ENCODE measurements at regions of chr12 and their contacts with region 1.

Region 1: DNA sequence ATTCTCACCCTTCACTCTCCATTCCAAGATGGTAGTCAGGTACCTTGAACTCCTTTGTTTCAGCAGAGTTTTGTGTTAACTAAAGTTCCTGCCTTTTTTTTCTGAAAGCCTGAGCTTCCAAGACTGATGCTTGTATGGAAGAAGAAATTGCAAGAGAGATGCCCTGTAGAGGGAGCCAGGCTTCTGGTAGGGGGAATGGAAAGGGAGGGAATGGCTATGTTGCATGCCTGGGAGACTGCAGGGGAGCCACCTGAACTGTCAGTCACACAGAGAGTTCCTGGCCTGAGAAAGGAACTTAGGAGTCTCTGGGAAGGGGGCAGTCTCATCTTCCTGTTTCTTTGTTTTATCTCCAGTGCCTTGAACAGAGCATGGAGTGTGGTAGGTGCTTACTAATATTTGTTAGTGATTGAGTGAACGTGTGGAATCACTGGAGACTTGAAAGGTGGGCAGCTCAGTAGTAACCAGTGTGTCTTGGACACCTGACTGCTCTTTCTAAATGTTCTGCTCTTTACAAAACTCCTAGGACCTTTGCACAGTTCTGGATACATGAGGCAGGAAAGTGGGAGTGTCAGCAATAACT is 132.2 kb downstream of the ANO4 start:
- DNase-seq: peak; percentile 39
- H3K4me3 ChIP-seq: no peak overlapping the region
- H3K27ac ChIP-seq: no peak overlapping the region
- H3K4me1 ChIP-seq: peaks cover 16% of the 10 kb centered on the region
- H3K27me3 ChIP-seq: no peaks in the 10 kb centered on the region
- CTCF ChIP-seq: peak; percentile 45 to 70

Region 2: DNA sequence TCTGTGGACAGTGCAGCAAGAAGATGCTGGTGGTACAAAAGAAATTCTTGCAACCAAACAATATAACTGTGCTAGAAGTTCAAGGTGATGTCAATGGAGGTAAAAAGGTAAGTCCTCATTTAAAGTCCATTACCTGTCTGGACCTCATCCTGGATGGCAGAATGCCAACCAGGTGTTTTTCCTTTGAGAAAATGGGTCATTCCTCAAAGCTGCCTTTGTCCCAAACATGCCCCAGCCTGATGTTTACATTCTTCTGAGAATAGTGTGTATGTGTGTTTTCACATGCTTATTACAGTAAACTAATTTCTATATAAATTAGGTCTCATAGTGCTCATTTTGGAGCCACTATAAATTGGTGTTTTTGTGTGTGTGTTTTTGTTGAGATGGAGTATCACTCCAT is 701.3 kb before region 1 on chr12:
- CTCF ChIA-PET with region 1: no interaction called
- dilution Hi-C with region 1: no loop called
- in situ Hi-C with region 1: no loop called
- intact Hi-C with region 1: no loop called
- DNase-seq: peak; percentile 85
- H3K4me3 ChIP-seq: no peak overlapping the region
- H3K27ac ChIP-seq: no peak overlapping the region
- H3K4me1 ChIP-seq: peaks cover 17% of the 10 kb centered on the region
- H3K27me3 ChIP-seq: no peaks in the 10 kb centered on the region
- CTCF ChIP-seq: no peak

Region 3: DNA sequence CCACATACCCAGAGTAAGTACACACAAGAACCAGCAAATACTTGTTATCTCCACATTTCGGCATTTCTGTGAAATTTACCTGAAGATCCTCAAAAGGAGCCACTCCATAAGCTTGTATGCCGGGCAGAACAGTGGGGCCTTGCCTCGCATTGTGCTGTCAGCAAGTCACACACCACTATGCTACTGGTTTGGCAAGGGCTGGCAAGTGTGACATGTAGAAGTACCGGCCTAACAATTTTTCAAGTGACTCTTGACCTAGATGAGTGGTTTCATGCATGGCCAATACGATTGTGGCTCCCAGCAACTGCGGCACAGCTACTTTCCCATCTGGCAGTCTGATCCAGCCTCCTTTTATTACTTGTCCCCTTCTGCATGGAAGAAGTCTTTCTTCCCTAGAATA is 283.5 kb before region 1 on chr12:
- CTCF ChIA-PET with region 1: no interaction called
- dilution Hi-C with region 1: no loop called
- in situ Hi-C with region 1: no loop called
- intact Hi-C with region 1: no loop called
- DNase-seq: no peak
- H3K4me3 ChIP-seq: no peak overlapping the region
- H3K27ac ChIP-seq: no peak overlapping the region
- H3K4me1 ChIP-seq: no peaks in the 10 kb centered on the region
- H3K27me3 ChIP-seq: no peaks in the 10 kb centered on the region
- CTCF ChIP-seq: no peak

Region 4: DNA sequence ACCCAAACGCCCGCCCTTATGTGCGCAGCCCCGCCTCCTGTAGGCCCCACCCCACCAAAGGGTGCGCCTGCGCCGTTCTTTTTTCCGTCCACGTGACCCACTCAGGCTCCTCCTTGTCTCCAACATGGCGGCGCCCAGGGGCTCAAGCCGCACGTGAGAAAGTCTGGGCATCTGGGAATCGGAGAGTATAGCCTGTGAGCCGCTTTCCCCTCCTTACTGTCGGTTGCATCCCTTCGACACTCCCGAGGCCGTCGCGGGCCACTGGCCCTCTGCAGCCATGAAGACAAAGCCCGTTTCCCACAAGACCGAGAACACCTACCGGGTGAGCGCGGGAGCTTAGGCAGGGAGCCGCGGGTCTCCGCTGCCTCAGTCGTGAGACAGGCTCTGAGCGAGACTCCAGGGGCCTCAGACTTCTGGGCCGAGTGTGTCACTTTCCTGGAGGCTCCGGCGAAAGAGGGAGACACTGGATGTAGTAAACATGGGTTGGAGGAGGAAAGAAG is 353.3 kb after region 1 on chr12 and contains the start of gene UTP20:
- CTCF ChIA-PET with region 1: no interaction called
- dilution Hi-C with region 1: no loop called
- in situ Hi-C with region 1: no loop called
- intact Hi-C with region 1: loop called (anchors 5 kb)
- DNase-seq: peak; percentile 84
- H3K4me3 ChIP-seq: peak within 1 kb of the TSS; percentile 82 to 100 (median 99)
- H3K27ac ChIP-seq: peak within 1 kb of the TSS; percentile 78
- H3K4me1 ChIP-seq: no peaks in the 10 kb centered on the region
- H3K27me3 ChIP-seq: no peaks in the 10 kb centered on the region
- CTCF ChIP-seq: no peak
- total RNA-seq, gene UTP20: 19.2 to 21.2 TPM

Region 5: DNA sequence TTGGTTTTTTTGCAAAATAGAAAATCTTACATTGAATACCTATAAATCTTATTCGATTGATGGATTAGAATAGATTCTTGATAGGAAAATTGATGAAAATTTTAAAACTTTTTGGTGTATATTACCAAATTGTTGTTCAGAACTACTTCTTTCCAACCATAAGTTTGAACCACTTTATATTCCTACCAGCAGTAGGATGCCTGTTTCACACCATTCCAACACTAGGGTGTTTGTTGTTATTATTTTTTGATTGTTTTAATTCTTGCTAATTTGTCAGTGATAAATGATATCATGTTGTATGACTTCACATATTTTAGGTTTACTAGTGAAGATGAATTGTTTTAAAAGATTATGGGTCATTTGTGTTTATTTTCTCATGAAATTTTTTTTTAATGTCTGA is 396.5 kb after region 1 on chr12:
- CTCF ChIA-PET with region 1: no interaction called
- dilution Hi-C with region 1: no loop called
- in situ Hi-C with region 1: no loop called
- intact Hi-C with region 1: loop called (anchors 1 kb)
- DNase-seq: no peak
- H3K4me3 ChIP-seq: no peak overlapping the region
- H3K27ac ChIP-seq: no peak overlapping the region
- H3K4me1 ChIP-seq: no peaks in the 10 kb centered on the region
- H3K27me3 ChIP-seq: no peaks in the 10 kb centered on the region
- CTCF ChIP-seq: no peak

Region 6: DNA sequence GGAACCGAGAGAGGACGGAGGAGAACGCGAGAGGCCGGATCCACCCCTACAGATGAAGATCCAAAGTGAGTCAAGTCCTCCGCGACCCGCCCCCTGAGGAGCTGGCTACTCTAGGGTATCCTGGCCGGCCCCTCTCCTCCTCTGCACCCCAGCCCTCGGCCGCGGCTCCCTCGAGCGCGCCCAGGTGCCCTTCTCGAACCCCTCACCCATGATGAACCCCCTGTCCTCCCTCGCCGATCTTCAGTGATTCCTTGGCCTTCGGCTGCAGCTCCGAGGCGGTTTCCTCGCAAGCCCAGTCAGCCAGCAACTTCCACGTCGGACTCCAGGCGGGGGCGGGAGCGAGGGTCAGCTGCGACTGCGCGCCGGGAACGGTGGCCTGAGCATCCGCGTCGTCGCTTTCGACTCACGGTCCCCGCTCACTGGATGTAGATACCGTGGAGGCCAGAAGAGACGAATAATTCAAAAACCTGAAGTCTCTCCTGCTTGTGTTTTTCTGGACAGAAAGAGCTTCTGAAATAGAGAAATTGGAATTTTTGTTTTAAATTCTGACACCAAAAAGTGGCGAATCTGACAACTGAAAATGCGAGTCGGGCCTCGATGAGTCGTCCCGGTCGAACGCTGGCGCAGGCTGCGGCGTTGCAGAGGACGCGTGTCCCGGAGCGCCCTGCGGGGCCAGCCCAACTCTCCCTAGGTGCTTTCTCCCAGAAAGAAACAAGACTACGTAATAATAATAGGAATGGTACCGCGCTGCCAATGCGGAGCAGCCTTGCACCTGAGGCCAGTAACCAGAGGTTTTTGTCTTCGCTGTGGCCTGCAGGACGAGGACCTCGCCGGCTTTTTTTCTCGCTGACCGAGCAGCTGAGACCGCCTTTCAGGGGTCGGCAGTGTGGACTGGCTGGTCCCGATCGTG is 480.9 kb after region 1 on chr12 and contains the start of gene ARL1:
- CTCF ChIA-PET with region 1: no interaction called
- dilution Hi-C with region 1: no loop called
- in situ Hi-C with region 1: no loop called
- intact Hi-C with region 1: loop called (anchors 10 kb)
- DNase-seq: peak; percentile 88
- H3K4me3 ChIP-seq: peak within 1 kb of the TSS; percentile 72 to 99 (median 88)
- H3K27ac ChIP-seq: peak within 1 kb of the TSS; percentile 98
- H3K4me1 ChIP-seq: peaks cover 24% of the 10 kb centered on the region
- H3K27me3 ChIP-seq: no peaks in the 10 kb centered on the region
- CTCF ChIP-seq: no peak
- total RNA-seq, gene ARL1: 64.0 to 93.5 TPM

Measured in mammary epithelial cell (primary cell).